Activated CD4-positive, alpha-beta T cell treated with anti-CD3 and anti-CD28 coated beads, Interleukin-2, amount 10 ng/mL, durations not matched to agents 24 days and 14 days (primary cell): ENCODE measurements at regions of chr20 and their contacts with region 1.

Region 1: DNA sequence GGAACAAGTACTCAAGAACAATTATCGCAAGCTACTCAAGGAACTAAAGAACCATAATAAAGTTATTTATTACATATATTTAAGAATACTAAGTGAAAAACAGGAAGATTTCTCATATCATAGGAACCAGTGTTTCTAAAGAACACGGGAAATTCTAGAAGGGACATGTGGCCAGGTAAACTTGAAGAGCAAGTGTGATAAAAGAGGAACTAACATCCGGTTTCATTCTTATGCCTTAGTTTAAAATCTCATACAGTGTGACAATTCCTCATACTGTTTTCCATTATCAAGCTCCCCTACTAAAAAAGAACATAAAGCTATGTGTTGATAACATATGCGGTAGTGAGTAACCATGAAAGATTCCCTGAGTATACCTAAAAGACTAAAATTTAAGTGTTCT is 163.5 kb upstream of the SHLD1 start:
- DNase-seq: no peak
- H3K4me3 Mint-ChIP-seq: peak overlapping the region; percentile 57
- H3K27ac Mint-ChIP-seq: peak overlapping the region; percentile 71
- H3K4me1 Mint-ChIP-seq: peaks cover 39% of the 10 kb centered on the region
- H3K27me3 Mint-ChIP-seq: no peaks in the 10 kb centered on the region

Region 2: GRCh38 chr20:5569021-5569420 is 17.7 kb before region 1 on chr20:
- intact Hi-C with region 1: loop called (anchors 2 kb)
- DNase-seq: peak; percentile 86
- H3K4me3 Mint-ChIP-seq: no peak overlapping the region
- H3K27ac Mint-ChIP-seq: no peak overlapping the region
- H3K4me1 Mint-ChIP-seq: peaks cover 26% of the 10 kb centered on the region
- H3K27me3 Mint-ChIP-seq: no peaks in the 10 kb centered on the region